Activated T-helper 1 cell treated with anti-CD3 and anti-CD28 coated beads, Interleukin-12 subunit alpha, Interleukin-12 subunit beta, Interleukin-2, Interleukin-4 antibody, amounts not matched to agents 30 ng/mL and 10 ng/mL and 1 ng/mL, durations not matched to agents 14 hours and 24 hours and 36 hours (primary cell): ENCODE measurements at regions of chr2 and their contacts with region 1.

Region 1: DNA sequence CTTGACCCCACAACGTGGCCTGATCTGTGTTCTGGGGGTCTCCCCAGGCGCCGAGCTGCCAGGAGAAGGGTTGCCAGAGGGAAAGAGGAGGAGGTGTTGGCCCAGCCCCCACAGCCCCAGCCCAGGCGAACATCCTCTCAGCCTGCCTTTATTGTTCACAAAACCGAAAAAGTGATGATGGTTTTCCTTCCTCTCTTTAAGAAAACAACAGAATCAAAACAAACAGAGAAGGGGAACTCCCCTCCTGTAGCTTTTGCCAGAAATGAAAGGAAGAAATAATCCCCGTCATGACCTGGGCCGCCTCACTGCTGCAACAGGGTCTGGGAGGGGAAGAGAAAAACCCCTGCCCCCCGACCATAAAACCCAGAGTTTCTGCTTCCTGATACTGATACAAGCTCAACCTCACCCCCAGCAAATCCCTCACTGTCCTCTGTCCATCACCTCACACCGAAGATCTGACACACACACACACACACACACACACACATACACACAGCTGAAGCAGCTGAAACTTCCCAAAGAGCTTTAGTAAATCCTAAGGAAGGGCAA is 52.0 kb downstream of the ZFP36L2 start:
- DNase-seq: peak; percentile 76
- H3K4me3 Mint-ChIP-seq: peak overlapping the region; percentile 32
- H3K27ac Mint-ChIP-seq: peak overlapping the region; percentile 89
- H3K4me1 Mint-ChIP-seq: peaks cover 75% of the 10 kb centered on the region
- H3K27me3 Mint-ChIP-seq: no peaks in the 10 kb centered on the region

Region 2: DNA sequence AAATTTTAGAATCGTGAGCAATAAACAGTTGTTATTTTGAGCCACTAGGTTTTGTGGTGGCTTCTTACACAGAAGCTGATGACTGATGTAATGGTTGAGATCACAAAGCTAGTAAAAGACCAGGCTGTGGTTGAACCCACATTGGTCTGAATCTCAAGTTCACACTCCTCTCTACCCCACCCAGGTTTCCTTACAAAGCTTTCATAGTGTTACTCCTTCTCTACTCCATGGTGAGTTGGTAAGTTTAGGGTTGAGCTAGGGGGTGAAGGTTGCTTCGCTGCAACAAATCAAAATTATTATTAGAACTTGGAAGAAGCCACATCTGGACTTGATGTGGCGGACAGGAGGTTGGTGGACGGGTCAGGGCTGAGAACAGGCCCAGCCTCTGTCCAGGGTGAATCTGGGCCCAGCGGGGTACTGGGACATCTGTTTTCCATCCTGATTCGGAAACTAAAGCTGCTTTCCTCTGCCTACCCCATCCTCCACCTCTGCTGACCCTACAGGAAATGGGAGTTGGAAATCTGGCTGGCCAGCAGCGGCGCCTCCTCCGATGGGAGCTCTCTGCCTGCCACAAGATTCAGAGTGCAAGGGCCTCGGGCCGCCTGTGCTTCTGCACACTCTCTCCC is 34.3 kb before region 1 on chr2:
- intact Hi-C with region 1: loop called (anchors 2 kb)
- DNase-seq: no peak
- H3K4me3 Mint-ChIP-seq: peak overlapping the region; percentile 74
- H3K27ac Mint-ChIP-seq: peak overlapping the region; percentile 90
- H3K4me1 Mint-ChIP-seq: peaks cover 66% of the 10 kb centered on the region
- H3K27me3 Mint-ChIP-seq: no peaks in the 10 kb centered on the region

Region 3: DNA sequence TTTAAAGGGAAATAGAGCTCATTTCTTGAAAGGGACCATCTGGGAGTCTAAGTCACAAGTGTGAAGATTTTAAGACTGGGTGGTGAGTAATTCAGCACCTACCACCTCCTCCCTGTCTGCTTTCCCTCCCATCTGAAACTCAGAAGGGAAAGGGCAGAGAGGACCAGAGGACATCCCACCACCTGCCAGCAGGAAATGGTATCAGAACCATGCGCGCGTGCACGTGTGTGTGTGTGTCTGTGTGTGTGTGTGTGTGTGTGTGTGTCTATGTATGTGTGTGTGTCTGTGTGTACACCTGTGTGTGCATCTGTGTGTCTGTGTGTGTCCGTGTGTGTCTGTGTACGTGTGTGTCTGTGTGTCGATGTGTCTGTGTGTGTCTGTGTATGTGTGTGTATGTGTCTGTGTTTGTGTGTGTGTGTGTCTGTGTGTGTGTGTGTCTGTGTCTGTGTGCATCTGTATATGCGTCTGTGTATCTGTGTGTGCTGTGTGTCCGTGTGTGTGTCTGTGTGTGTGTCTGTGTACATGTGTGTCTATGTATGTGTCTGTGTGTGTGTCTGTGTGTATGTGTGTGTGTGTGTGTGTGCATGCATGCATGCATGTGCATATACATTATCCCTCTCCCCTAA is 24.8 kb before region 1 on chr2:
- intact Hi-C with region 1: loop called (anchors 1 kb)
- DNase-seq: no peak
- H3K4me3 Mint-ChIP-seq: peak overlapping the region; percentile 31
- H3K27ac Mint-ChIP-seq: peak overlapping the region; percentile 87
- H3K4me1 Mint-ChIP-seq: peaks cover 45% of the 10 kb centered on the region
- H3K27me3 Mint-ChIP-seq: no peaks in the 10 kb centered on the region

Region 4: DNA sequence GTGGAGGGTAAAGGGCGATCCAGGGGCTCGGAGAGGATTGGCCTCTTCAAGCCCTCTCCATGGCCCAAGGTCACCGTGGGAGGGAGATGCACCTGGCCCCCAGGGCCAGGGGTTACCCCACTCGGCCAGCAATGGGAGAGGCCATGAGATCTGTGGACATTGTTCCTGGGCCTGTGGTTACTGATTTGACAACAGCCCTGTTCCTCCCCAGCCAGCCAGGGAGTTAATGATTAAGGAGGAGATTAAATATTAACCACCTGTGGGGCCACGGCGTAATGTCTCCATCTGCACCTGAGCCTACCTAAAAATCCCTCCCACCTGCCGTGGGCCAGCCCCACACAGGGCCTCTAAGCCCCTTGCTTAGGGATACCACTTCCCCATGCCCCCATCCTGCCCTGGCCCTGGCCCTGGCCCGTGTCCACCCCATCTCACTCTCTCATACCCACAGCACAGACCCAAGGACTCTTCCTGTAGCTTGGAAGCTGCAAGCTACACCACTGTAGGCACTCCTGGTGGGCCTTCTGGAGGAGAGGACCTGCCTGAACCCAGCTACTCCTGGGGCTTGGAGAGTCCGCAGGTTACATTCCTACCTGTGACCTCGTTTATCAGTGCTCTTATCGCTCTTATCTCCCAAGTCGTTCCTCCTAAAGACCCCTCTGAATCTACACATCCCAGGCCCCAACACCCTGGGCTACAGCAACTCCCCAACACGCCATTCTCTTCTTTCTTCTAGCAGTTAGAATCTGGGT is 19.9 kb after region 1 on chr2:
- intact Hi-C with region 1: loop called (anchors 1 kb)
- DNase-seq: no peak
- H3K4me3 Mint-ChIP-seq: peak overlapping the region; percentile 79
- H3K27ac Mint-ChIP-seq: peak overlapping the region; percentile 92
- H3K4me1 Mint-ChIP-seq: peaks cover 51% of the 10 kb centered on the region
- H3K27me3 Mint-ChIP-seq: no peaks in the 10 kb centered on the region

Region 5: GRCh38 chr2:43219383-43220228 is 45.2 kb after region 1 on chr2:
- intact Hi-C with region 1: loop called (anchors 1 kb)
- DNase-seq: peak; percentile 78
- H3K4me3 Mint-ChIP-seq: peak overlapping the region; percentile 94
- H3K27ac Mint-ChIP-seq: peak overlapping the region; percentile 88
- H3K4me1 Mint-ChIP-seq: peaks cover 48% of the 10 kb centered on the region
- H3K27me3 Mint-ChIP-seq: no peaks in the 10 kb centered on the region

Region 6: DNA sequence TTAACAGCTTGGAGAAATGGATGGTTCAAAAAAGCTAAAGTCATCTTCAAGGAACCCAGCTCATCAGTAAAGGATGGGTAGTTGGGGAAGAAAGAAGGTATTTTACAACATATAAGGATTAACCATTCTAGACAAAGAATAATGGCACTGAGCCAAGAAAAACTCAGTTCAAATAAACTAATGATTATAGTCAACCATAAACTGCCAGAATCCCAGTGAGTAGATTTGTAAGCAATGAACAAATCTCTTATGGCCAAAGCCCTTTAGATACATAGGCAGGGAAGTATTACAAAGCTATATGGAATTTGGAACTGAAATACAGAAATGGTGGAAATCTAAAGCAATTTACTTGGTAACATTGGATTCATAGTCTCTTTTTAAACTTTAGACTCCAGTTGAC is 144.3 kb after region 1 on chr2:
- intact Hi-C with region 1: no loop called
- DNase-seq: no peak
- H3K4me3 Mint-ChIP-seq: no peak overlapping the region
- H3K27ac Mint-ChIP-seq: no peak overlapping the region
- H3K4me1 Mint-ChIP-seq: peaks cover 11% of the 10 kb centered on the region
- H3K27me3 Mint-ChIP-seq: no peaks in the 10 kb centered on the region